ENCODE measurements at regions of chr13 and their contacts with region 1.

Region 1: DNA sequence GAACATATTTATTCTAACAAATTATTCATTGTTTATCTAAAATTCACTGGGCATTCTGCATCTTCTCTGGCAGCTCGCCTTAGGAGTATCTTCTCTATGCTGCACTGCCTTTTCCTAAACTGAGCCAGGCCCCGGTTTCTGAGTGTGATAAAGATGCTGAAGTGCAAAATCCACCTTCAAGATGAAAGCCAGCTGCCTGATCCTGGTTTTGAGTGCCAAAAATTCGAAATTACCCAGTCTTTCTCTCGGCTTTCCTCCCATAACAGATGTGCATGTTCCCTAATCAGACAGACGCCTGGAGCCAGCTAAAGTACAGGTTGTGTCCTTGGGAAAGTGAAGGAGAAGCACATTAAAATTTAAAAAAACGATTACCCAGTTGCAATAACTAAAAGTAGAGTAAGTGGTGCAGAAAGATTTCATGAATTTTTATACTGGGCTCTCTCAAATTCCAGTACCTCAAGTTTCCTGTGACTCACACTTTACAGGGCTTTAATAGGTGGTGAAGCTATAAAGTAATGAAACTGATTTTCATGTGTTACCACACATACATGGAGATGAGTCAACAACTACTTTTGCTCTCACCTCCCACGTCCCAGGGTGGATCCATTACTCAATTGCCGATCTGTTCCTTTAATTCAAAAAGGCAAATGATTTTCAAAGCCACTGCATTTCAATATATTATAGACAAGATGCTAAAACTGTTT is 65.0 kb upstream of the GTF2F2 start:
- DNase-seq: peak; percentile 24
- ATAC-seq: peak; percentile 86
- H3K4me3 ChIP-seq: no peak overlapping the region
- H3K27ac ChIP-seq: peak overlapping the region; percentile 39; the same call in 1 of the 2 replicates
- H3K4me1 ChIP-seq: peaks cover 10% of the 10 kb centered on the region; the same call in 1 of the 2 replicates
- H3K27me3 ChIP-seq: no peaks in the 10 kb centered on the region
- CTCF ChIP-seq: no peak

Region 2: GRCh38 chr13:44680746-44681355 is 374.5 kb before region 1 on chr13:
- CTCF ChIA-PET with region 1: no interaction called
- POLR2A ChIA-PET with region 1: no interaction called
- in situ Hi-C with region 1: no loop called
- intact Hi-C with region 1: no loop called
- DNase-seq: no peak
- ATAC-seq: no peak
- H3K4me3 ChIP-seq: no peak overlapping the region
- H3K27ac ChIP-seq: no peak overlapping the region
- H3K4me1 ChIP-seq: no peaks in the 10 kb centered on the region
- H3K27me3 ChIP-seq: no peaks in the 10 kb centered on the region
- CTCF ChIP-seq: no peak

Region 3: GRCh38 chr13:45082964-45083363 is 27.6 kb after region 1 on chr13:
- CTCF ChIA-PET with region 1: no interaction called
- POLR2A ChIA-PET with region 1: interaction called, 14 read pairs
- in situ Hi-C with region 1: no loop called
- intact Hi-C with region 1: no loop called
- DNase-seq: no peak
- ATAC-seq: no peak
- H3K4me3 ChIP-seq: no peak overlapping the region
- H3K27ac ChIP-seq: no peak overlapping the region
- H3K4me1 ChIP-seq: no peaks in the 10 kb centered on the region
- H3K27me3 ChIP-seq: no peaks in the 10 kb centered on the region
- CTCF ChIP-seq: no peak